Thyroid gland (tissue), 4 donors: ENCODE measurements at regions of chr1 and their contacts with region 1.

Region 1: GRCh38 chr1:64242895-64243756 is 39.7 kb downstream of the UBE2U start:
- DNase-seq: no peak
- H3K4me3 ChIP-seq: no peak overlapping the region
- H3K27ac ChIP-seq: no peak overlapping the region
- H3K4me1 ChIP-seq: peaks cover 0 to 4% of the 10 kb centered on the region in 2 donors
- H3K27me3 ChIP-seq: no peaks in the 10 kb centered on the region
- CTCF ChIP-seq: peak in 5 of 6 experiments; percentile 10 to 56 (median 47)
- POLR2A ChIP-seq: no peak

Region 2: DNA sequence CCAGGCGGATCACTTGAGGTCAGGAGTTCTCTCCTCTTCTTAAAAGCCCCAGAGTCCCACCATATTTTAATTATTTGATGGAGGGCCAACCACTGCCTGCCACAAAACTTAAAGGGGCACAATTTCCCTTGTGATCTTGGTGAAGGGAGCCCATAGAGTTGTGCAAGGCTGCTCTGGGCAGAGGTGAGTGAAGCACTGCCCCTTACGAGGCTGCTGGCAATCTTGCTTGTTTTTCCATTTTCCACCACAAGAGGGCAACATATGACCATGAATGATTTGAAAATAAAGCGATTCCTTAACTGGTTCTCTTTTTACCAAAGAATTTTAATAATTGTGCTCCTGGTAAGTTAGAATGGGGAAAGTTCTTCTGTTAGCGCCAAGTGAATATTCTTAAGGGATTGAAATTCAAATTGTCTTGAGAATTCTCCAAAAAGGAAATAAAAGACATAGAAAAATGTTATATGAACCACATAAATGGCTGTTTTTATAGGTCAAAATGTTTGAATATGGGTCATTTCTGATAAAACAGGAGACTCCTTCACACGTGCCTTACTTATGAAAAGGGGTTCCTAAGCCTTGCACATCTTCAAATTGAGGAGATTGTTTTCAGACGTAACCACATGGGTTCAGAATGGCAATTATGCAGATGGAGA is 627.2 kb before region 1 on chr1:
- intact Hi-C with region 1: loop called (anchors 5 kb)
- DNase-seq: peak; percentile 51 to 54
- H3K4me3 ChIP-seq: no peak overlapping the region
- H3K27ac ChIP-seq: no peak overlapping the region
- H3K4me1 ChIP-seq: peaks cover 0 to 4% of the 10 kb centered on the region in 2 donors
- H3K27me3 ChIP-seq: no peaks in the 10 kb centered on the region
- CTCF ChIP-seq: peak; percentile 52 to 83 (median 76)
- POLR2A ChIP-seq: no peak

Region 3: GRCh38 chr1:63691701-63692425 is 551.3 kb before region 1 on chr1:
- intact Hi-C with region 1: loop called (anchors 10 kb)
- DNase-seq: peak; percentile 30 to 35
- H3K4me3 ChIP-seq: no peak overlapping the region
- H3K27ac ChIP-seq: no peak overlapping the region
- H3K4me1 ChIP-seq: no peaks in the 10 kb centered on the region
- H3K27me3 ChIP-seq: no peaks in the 10 kb centered on the region
- CTCF ChIP-seq: peak; percentile 30 to 86 (median 72)
- POLR2A ChIP-seq: no peak